Cardiac septum (tissue), 1 donor: ENCODE measurements at regions of chr2 and their contacts with region 1.

Region 1: DNA sequence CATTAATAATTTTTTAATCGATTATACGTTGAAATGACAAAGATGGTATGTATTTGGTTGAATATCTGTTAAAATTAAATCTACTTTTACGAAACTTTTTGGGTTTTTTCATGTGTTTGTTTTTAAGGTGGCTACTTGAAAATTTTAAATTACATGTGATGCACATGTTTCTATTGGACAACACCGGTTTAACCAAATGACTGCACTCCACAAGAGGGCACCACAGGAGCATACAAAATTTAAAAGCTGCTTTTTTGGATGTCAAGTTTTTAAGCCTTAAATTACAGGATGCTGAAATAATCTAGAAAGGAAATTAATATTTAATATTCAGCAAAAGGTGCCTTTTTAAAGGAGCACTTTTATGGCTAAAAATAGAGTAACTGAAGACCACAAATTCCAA is 98.7 kb downstream of the ACVR1 start:
- DNase-seq: no peak

Region 2: DNA sequence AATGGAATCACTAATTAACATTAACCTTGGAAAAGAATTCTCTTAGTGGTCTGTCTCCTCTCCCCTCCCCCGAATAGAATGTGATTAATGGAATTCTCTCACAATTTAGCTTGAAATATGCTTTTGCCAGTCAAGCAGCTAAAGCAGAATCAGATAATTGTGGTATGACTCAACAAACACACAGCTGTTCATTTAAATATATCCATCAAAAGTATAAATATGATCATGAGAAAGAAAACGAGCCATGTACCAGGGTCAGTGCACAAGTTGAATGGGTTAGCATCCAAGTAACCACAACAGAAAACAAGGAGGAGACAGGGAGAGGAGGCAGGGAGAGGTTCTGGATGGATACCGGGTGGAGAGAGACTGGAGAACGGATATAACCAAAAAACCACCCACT is 31.8 kb after region 1 on chr2:
- intact Hi-C with region 1: no loop called
- DNase-seq: no peak

Region 3: DNA sequence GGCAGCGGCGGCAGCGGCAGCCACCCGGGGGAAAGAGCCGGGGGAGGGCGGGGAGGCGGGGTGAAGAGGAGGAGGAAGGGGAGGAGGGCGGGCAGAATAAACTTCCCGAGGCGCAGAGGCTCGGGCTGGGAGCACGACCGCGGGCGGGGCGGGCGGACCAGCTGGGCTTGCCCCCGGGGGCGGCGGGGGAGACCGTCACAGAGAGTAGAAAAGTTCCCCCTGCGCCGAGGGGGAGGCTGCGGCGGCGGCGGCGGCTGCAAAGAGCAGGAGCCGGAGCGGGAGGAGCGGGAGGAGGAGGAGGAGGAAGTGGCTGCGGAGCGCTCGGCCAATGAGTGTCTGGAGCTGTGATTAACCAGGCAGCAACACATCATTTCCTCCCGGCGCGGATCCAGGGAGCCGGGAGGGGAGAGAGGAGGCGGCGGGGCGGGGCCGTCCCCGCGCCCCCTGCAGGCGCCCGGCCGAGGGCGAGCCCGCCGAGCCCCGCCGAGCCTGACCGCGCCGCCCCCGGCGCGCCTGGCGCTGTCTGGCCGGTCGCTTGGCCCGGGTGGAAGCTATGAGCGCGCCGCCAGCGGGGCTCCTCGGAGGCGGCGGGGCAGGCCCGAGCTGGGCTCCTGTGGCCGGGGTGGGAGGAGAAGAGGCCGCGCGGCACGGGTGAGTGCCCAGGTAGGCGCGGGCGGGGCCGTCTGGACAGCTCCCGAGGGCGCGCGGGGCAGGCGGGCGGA is 98.8 kb after region 1 on chr2 and contains the start of gene ACVR1:
- intact Hi-C with region 1: loop called (anchors 2 kb)
- DNase-seq: peak; percentile 98
- total RNA-seq, gene ACVR1: 22.7 TPM

Region 4: DNA sequence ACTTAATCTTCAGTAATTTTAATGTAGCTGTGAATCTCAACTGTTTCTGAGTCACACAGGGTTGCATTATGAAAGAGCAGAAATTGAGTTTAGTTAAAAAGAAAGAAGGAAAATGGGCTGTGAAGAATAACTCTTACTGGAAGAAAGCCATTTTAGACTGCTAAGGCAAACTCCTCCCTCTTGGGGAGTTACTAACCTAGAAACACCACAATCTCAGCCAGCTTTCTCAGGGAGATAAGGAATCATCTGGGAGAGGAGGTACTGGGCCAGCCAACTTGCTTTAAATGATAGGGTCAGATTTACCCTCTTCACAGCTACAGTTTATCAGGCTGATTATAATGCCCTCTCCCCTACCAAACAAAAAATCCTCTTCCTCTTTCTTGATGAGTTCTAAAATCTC is 559.6 kb after region 1 on chr2:
- intact Hi-C with region 1: no loop called
- DNase-seq: no peak